ENCODE measurements at regions of chr1 and their contacts with region 1.

Region 1: GRCh38 chr1:239882967-239883366 is 208.7 kb upstream of the FMN2 start:
- DNase-seq: no peak
- H3K4me3 ChIP-seq: no peak overlapping the region
- H3K27ac ChIP-seq: peak overlapping the region in 6 of 59 donors; percentile 4 to 47 (median 12)
- H3K27me3 ChIP-seq: no peaks in the 10 kb centered on the region
- CTCF ChIP-seq: no peak

Region 2: GRCh38 chr1:239204401-239204800 is 678.6 kb before region 1 on chr1:
- intact Hi-C with region 1: no loop called
- DNase-seq: no peak
- H3K4me3 ChIP-seq: no peak overlapping the region
- H3K27ac ChIP-seq: no peak overlapping the region
- H3K27me3 ChIP-seq: no peaks in the 10 kb centered on the region
- CTCF ChIP-seq: no peak

Region 3: GRCh38 chr1:239906394-239906793 is 23.4 kb after region 1 on chr1:
- intact Hi-C with region 1: loop called in 1 of 2 experiments (anchors 2 kb)
- DNase-seq: no peak
- H3K4me3 ChIP-seq: no peak overlapping the region
- H3K27ac ChIP-seq: no peak overlapping the region
- H3K27me3 ChIP-seq: no peaks in the 10 kb centered on the region
- CTCF ChIP-seq: no peak